Ascending aorta (tissue), 2 donors: ENCODE measurements at regions of chr1 and their contacts with region 1.

Region 1: GRCh38 chr1:9874959-9875635 is 35.0 kb downstream of the CTNNBIP1 start:
- DNase-seq: peak; percentile 15 to 79
- H3K4me3 ChIP-seq: peak overlapping the region in 1 of 2 donors; percentile 59
- H3K27ac ChIP-seq: peak overlapping the region; percentile 17 to 67
- H3K4me1 ChIP-seq: peaks cover 5 to 14% of the 10 kb centered on the region in 2 donors
- H3K27me3 ChIP-seq: no peaks in the 10 kb centered on the region
- CTCF ChIP-seq: peak; percentile 85 to 97 (median 96)

Region 2: GRCh38 chr1:9164532-9164900 is 710.6 kb before region 1 on chr1:
- intact Hi-C with region 1: no loop called
- DNase-seq: no peak
- H3K4me3 ChIP-seq: no peak overlapping the region
- H3K27ac ChIP-seq: peak overlapping the region; percentile 81 to 91
- H3K4me1 ChIP-seq: peaks cover 11 to 20% of the 10 kb centered on the region in 2 donors
- H3K27me3 ChIP-seq: no peaks in the 10 kb centered on the region
- CTCF ChIP-seq: no peak

Region 3: DNA sequence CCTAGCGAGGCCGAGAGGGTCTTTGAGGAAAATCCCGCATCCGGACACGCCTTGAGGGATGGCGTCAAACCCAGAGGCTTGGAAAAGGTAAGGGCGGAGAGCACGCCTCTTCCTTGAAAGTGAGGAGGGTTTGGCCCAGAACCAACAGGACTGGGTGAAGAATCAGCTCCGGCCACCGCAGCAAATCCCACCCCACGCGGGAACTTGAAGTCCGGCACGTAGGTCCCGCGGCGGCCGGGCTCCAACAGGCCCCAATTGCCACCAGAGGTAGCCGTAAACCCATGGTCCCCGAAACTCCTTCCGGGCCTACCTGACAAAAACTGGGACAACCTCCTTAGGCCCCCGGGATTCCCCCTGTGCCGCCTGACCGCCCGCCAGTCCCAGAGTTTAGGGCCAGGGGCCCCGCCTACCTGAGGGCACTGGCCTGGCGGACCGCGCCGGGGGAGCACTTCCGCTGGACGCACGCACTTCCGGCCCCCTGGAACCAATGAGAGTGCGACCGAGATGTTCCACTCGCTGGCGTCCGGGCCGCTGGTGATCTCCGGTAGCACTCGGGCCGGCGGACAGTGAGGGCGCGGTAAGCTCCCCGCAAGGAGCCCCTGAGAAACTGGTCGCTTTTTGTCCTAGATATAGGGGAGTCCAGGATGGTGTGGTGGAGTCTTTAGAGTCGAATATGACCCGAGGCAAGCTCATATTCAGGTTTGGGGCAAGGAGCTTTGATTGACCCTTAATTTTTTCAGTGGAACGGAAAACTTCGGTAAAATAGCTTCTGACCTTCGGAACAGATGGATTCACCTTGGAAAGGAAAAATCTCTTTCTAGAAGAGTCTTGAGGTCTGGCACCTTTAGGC is 68.1 kb after region 1 on chr1 and contains the starts of genes LZIC and NMNAT1:
- intact Hi-C with region 1: loop called (anchors 1 kb)
- DNase-seq: peak; percentile 55 to 96
- H3K4me3 ChIP-seq: peak within 1 kb of the TSS; percentile 88 to 95
- H3K27ac ChIP-seq: peak within 1 kb of the TSS; percentile 84 to 85
- H3K4me1 ChIP-seq: peaks cover 0 to 17% of the 10 kb centered on the region in 2 donors
- H3K27me3 ChIP-seq: no peaks in the 10 kb centered on the region
- CTCF ChIP-seq: peak in 1 of 3 experiments; percentile 12
- total RNA-seq, gene LZIC: 3.7 TPM
- total RNA-seq, gene NMNAT1: 7.9 TPM

Region 4: DNA sequence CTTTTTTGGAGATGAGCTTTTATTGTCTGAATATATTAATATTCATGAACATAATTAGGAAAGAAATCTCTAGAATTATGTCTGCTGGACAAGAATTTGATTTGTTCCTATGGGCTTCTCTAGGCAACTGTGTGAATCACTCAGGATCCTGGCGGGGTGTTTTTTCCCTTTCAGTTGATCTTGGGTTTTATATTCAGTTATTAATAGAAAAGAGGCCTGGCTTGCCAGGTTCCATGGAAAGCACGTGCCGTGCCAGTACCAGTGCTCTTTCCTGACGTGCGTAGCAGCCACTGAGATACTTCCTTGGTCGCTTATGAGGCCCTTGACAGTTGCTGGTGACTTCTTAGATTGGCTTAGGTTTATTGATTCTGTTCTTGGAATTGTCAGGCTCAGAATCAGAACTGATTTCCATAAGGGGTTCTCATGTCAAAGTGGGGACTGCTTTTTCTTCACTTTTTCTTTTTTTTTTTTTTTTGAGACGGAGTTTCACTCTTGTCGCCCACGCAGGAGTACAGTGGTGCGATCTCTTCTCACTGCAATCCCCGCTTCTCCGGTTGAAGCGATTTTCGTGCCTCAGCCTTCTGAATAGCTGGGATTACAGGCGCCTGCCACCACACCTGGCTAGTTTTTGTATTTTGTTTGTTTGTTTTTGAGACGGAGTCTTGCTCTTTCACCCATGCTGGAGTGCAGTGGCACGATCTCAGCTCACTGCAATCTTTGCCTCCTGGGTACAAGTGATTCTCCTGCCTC is 286.6 kb after region 1 on chr1:
- intact Hi-C with region 1: loop called (anchors 2 kb)
- DNase-seq: peak; percentile 29 to 90
- H3K4me3 ChIP-seq: no peak overlapping the region
- H3K27ac ChIP-seq: peak overlapping the region; percentile 80 to 84
- H3K4me1 ChIP-seq: peaks cover 0 to 18% of the 10 kb centered on the region in 2 donors
- H3K27me3 ChIP-seq: no peaks in the 10 kb centered on the region
- CTCF ChIP-seq: no peak

Region 5: DNA sequence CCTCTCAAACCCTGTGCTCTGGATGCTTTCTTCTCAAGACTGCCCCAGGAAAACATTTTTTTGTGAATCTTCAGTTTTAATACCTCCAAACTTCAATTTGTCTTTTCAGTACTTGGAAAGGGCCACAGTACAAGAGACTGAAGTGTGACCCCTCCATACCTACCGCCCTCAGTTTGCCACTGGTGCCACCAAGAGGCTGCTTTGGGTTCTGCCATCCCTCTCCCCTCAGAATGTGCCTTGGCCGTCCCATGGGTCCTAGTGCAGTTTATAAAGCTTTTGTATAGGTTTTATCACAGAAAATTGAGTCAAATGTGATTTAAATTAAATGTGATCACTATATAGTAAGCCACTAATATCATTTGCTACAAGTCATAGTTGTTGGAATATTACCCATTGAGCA is 462.9 kb after region 1 on chr1:
- intact Hi-C with region 1: loop called (anchors 5 kb)
- DNase-seq: no peak
- H3K4me3 ChIP-seq: no peak overlapping the region
- H3K27ac ChIP-seq: no peak overlapping the region
- H3K4me1 ChIP-seq: no peaks in the 10 kb centered on the region
- H3K27me3 ChIP-seq: no peaks in the 10 kb centered on the region
- CTCF ChIP-seq: peak; percentile 61 to 84 (median 67)